Activated CD4-positive, alpha-beta memory T cell treated with anti-CD3 and anti-CD28 coated beads for 36 hours (primary cell): ENCODE measurements at regions of chr17 and their contacts with region 1.

Region 1: GRCh38 chr17:69414408-69415274 is at the start of gene MAP2K6:
- DNase-seq: peak; percentile 88
- H3K4me3 Mint-ChIP-seq: no peak within 1 kb of the TSS
- H3K27ac Mint-ChIP-seq: no peak within 1 kb of the TSS
- H3K4me1 Mint-ChIP-seq: peaks cover 17% of the 10 kb centered on the region
- H3K27me3 Mint-ChIP-seq: no peaks in the 10 kb centered on the region
- total RNA-seq, gene MAP2K6: 2.2 TPM

Region 2: DNA sequence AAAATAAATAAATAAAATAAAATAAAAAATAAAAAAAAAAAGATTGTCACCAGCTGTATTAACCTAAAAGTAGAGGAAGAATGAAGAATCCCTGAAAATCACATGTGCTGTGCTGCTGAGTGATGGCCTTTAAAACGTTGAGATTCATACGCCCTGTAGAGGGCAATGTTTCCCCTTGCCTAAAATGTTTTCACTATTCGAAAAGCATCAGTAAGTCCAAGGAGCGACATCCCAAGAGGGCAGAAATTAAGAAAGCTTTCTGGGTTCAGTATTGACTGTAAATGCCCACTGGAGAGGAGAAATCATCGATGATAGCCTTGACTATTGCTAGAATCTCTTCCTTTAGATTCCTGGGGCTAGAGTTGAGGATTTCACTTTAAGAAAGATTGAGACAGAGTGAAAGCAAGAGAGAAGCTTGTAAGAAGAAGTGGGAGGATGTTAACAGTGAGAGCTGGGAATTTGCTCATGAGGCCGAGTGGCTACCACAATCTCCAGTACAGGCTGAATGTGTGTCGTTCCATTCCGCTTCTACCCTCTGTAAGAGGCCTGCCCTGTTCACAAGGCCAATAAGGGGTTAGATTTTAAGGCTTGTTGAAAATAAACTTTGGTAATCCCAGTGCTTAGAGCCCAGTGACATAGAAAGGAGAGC is 642.6 kb before region 1 on chr17:
- CTCF ChIA-PET with region 1: no interaction called
- POLR2A ChIA-PET with region 1: no interaction called
- intact Hi-C with region 1: loop called (anchors 10 kb)
- DNase-seq: no peak
- H3K4me3 Mint-ChIP-seq: no peak overlapping the region
- H3K27ac Mint-ChIP-seq: no peak overlapping the region
- H3K4me1 Mint-ChIP-seq: peaks cover 4% of the 10 kb centered on the region
- H3K27me3 Mint-ChIP-seq: no peaks in the 10 kb centered on the region

Region 3: DNA sequence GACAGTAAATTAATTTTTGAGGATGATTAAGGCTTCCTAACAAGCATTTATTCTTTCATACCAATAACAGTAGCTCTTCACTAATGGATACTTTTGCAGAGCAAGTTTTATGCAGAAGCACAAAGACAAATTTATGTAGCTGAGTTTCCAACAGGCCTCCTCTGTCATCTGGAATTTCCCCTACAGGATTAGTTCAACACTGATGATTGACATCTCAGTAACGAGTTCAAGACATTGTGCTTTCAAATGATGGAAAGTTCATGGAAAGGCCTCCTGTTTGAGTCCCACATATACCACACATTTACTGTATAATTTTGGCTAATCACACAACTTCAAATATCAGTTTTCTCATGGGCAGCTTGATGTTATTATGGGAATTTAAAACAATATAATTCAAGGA is 226.6 kb before region 1 on chr17:
- CTCF ChIA-PET with region 1: no interaction called
- POLR2A ChIA-PET with region 1: no interaction called
- intact Hi-C with region 1: no loop called
- DNase-seq: no peak
- H3K4me3 Mint-ChIP-seq: no peak overlapping the region
- H3K27ac Mint-ChIP-seq: no peak overlapping the region
- H3K4me1 Mint-ChIP-seq: no peaks in the 10 kb centered on the region
- H3K27me3 Mint-ChIP-seq: no peaks in the 10 kb centered on the region

Region 4: DNA sequence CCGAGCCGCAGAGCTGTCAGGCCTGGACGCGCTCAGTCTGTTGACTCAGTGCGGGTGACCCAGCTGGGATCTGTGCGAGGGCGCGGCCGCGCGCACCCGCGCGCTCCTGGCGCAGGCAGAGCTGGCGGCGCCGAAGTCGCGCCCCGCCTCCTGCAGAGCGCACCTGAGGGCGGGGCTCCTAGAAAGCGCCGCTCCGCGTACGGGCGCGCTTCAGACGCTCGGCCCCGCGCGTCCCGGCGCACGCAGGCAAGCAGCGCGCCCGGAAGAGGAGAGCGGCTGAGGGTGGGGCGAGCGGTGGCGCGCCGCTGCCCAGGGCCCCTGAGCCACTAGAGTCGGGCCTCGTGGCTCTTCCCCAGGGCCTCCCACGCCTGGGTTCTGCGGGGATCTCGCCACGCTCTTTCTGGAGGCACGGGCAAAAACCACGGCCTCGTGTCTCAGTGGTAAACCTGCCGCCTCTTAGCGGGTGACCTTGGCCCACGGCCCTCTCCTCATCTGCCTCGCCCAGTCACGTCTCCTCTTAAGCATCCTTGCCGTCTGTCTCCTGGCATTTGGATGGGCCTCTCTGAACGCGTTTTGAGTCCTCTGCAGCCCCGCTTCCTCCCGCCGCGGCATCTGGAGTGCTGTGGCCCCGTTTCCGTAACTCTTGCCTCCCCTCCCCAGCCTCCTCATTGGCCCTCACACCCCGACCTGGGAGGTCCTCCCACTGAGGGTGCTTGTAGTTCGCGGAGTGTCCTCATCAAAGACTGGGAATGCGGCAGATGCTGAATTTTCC is 87.4 kb before region 1 on chr17 and contains the start of gene ABCA5:
- CTCF ChIA-PET with region 1: no interaction called
- POLR2A ChIA-PET with region 1: interaction called, 4 read pairs
- intact Hi-C with region 1: loop called (anchors 1 kb)
- DNase-seq: peak; percentile 93
- H3K4me3 Mint-ChIP-seq: peak within 1 kb of the TSS; percentile 97
- H3K27ac Mint-ChIP-seq: peak within 1 kb of the TSS; percentile 87
- H3K4me1 Mint-ChIP-seq: peaks cover 28% of the 10 kb centered on the region
- H3K27me3 Mint-ChIP-seq: peaks cover 2% of the 10 kb centered on the region
- total RNA-seq, gene ABCA5: 12.8 to 13.0 TPM

Region 5: DNA sequence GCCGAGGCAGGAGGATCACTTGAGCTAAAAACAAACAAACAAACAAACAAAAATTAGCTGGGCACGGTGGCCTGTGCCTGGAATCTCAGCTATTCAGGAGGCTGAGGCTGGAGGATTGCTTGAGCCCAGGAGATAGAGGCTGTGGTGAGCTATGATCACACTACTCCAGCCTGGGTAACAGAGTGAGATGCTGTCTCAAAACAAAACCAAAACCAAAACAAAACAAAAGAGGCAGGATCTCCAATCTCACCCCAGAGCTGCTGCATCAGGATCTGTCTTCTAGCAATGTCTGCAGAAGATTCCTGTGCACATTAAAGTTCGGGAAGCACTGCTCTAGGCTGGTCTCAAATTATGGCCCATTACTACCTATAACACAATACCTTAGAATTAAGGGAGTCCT is 43.0 kb after region 1 on chr17:
- CTCF ChIA-PET with region 1: no interaction called
- POLR2A ChIA-PET with region 1: no interaction called
- intact Hi-C with region 1: loop called (anchors 2 kb)
- DNase-seq: no peak
- H3K4me3 Mint-ChIP-seq: no peak overlapping the region
- H3K27ac Mint-ChIP-seq: no peak overlapping the region
- H3K4me1 Mint-ChIP-seq: peaks cover 11% of the 10 kb centered on the region
- H3K27me3 Mint-ChIP-seq: no peaks in the 10 kb centered on the region

Region 6: GRCh38 chr17:70137451-70138230 is 723.0 kb after region 1 on chr17:
- CTCF ChIA-PET with region 1: no interaction called
- POLR2A ChIA-PET with region 1: no interaction called
- intact Hi-C with region 1: loop called (anchors 10 kb)
- DNase-seq: peak; percentile 58
- H3K4me3 Mint-ChIP-seq: peak overlapping the region; percentile 26
- H3K27ac Mint-ChIP-seq: peak overlapping the region; percentile 65
- H3K4me1 Mint-ChIP-seq: peaks cover 23% of the 10 kb centered on the region
- H3K27me3 Mint-ChIP-seq: peaks cover 14% of the 10 kb centered on the region